ENCODE measurements at regions of chr19 and their contacts with region 1.

Region 1: DNA sequence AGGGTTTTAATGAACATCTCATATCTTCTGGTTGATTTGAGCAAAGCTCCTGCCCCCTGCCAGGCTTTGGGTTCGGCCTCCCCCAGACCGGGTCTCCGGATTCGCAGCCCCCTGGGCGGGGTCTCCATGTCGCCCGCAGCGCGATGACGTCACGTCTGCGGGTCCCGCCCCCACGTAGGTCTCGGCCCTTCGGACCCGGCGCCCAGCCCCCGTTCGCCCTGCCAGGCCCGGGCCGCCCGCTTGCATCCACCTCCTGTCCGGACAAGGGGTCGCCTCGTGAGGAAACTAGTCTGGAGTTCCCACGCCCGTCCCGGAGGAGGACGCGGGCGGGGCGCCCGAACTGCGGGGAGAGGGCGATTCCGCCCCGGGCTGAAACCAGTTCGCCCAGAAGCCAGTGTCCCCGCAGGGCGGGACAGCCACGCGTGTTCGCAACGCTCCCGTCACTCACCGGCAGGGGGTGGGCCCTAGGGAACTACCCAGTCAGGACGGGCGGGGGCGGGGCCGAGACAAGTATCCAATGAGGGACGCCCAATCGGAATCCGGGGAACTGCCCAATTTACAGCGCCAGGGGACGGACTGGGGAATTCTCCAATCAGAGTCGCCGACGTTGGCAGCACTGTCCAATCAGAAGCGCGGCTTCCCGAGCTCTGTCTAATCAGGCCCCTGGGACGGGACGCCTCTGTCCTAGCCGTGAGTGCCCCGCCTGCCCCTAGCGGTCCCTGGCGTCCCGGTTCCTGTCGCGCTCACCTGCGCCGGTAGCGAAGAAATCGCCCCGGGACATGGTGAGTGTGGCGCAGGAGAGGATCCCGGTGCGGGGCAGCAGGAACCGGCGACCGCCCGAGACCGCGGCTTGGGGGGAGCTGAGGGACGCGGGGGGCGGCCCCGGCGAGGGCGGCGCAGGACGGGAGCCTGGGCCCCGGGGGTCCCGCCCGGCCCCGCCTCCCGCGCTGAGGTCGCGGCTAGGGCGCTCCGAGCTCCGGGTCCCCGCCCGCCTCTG is at the start of gene ZNF555:
- DNase-seq: peak; percentile 93 to 94
- H3K4me3 ChIP-seq: peak within 1 kb of the TSS; percentile 78
- H3K27ac ChIP-seq: peak within 1 kb of the TSS; percentile 59
- H3K4me1 ChIP-seq: no peaks in the 10 kb centered on the region
- H3K27me3 ChIP-seq: no peaks in the 10 kb centered on the region
- CTCF ChIP-seq: peak; percentile 61; the same call in 1 of the 2 replicates
- total RNA-seq, gene ZNF555: 1.2 and 2.2 TPM in 2 replicates

Region 2: DNA sequence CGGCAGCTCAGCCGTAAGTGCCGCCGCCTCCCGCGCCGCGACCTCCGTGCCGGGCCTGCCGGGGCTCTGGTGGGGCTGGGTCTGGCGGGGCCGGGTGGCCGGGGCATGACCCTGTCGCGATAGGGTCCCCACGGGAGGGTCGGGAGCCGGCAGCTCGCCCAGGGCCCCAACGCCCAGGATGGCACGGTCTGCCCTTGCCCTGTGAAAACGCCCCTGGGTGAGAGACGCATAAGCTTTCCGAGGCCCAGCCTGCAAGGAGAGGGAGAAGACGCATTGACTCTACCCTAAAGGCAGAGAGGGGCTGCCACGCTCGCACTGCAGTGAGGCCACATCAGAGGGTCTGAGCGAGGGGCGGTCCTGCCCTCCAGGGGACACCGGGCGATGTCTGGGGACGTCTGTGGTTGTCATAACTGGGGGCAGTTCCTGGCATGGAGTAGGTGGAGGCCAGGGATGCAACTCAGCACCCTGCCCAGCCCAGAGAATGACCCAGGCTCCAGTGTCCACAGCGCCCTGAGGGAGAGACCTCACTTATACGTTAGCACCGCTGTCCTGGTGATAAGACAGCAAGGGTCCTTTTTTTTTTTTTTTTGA is 20.9 kb before region 1 on chr19:
- CTCF ChIA-PET with region 1: no interaction called
- POLR2A ChIA-PET with region 1: no interaction called
- intact Hi-C with region 1: loop called (anchors 1 kb)
- DNase-seq: peak in 1 of 2 experiments; percentile 15
- H3K4me3 ChIP-seq: peak overlapping the region; percentile 75
- H3K27ac ChIP-seq: no peak overlapping the region
- H3K4me1 ChIP-seq: no peaks in the 10 kb centered on the region
- H3K27me3 ChIP-seq: no peaks in the 10 kb centered on the region
- CTCF ChIP-seq: no peak

Measured in PC-9 (cell line).